Sigmoid colon (tissue), 7 donors: ENCODE measurements at regions of chr9 and their contacts with region 1.

Region 1: DNA sequence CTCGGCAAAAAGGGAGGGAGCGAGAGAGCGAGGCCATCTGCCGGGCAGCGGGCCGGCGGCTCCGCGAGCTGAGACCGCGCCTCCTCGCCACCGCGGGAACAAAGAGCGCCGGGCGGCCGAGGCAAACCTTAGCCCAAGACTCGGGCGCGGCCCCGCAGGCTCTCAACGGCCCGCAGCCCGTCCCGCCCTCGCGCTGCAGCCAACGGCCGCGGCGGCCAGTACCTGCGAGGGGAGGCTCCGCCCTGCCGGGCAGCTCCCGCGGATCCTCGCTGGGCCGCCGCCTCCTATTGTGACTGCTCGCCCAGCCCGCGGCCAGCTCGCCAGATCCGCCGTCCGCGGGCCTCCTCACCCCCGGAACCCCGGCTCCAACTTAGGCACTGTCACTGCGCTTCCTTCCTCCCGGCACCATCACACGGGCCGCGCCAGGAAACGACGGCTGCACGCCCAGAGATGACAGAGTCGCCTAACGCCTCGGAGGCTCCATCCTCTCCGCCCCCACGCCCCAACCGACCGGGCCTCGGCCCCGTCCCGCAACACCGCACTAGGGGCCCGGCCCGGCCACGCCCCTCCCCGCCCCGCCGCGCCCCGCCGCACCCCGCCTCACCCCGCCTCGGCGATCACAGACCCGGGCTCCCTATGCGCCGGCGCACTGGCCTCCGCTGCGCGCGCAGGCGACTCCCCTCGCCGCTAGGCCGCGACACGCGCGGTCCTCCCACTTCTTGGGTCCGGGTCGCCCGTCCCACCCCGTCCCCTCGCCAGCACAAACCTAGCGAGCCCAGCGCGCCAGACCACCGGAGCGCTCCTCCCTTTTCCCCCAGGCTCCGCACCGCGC is 479 bp upstream of the RNF38 start:
- DNase-seq: peak; percentile 93
- H3K4me3 ChIP-seq: peak overlapping the region; percentile 81 to 88 (median 86)
- H3K27ac ChIP-seq: peak overlapping the region; percentile 94 to 98 (median 96)
- H3K4me1 ChIP-seq: peaks cover 0 to 35% (median 26%) of the 10 kb centered on the region in 4 donors
- H3K27me3 ChIP-seq: no peaks in the 10 kb centered on the region
- CTCF ChIP-seq: no peak
- EP300 ChIP-seq: no peak
- POLR2A ChIP-seq: peak in 1 of 2 donors; percentile 28

Region 2: DNA sequence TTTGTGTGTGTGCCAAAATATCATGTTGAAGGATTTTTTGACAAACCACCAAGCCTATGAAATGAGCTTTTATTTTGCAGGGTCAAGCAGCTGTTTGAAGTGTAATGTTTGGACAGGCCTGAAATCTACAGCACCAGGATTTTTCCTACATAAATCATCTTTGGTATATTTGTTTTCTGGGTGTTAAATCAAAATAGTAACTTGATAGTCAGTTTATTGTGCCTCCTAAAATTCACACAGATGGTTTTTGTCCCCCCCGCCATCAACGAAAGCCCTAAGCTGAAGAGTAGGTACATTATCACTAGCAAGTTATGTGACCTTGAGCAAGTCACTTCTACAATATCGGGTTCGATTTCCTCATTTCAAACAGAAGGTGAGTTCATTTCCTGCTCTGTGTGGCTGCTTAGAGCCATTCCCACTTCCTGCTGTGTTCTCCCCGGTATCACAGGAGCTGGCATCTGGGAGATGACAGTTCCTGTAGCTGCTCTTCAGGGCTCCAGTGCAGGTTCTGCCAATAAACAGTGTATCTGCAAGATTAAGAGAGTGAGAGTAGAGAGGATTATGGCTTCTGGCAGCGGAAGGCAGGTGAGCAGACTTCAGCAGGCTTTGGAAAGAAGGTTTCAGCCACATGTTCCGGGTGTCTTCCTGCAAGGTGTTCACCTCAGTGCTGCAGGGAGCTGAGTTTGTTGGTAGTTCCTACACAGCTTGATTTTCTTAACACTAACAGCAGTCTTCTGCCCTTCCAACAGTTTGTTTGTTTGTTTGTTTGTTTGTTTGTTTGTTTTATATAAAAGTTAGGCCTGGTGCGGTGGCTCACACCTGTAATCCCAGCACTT is 93.9 kb before region 1 on chr9:
- intact Hi-C with region 1: no loop called
- DNase-seq: no peak
- H3K4me3 ChIP-seq: no peak overlapping the region
- H3K27ac ChIP-seq: no peak overlapping the region
- H3K4me1 ChIP-seq: no peaks in the 10 kb centered on the region
- H3K27me3 ChIP-seq: no peaks in the 10 kb centered on the region
- CTCF ChIP-seq: no peak
- EP300 ChIP-seq: no peak
- POLR2A ChIP-seq: no peak

Region 3: DNA sequence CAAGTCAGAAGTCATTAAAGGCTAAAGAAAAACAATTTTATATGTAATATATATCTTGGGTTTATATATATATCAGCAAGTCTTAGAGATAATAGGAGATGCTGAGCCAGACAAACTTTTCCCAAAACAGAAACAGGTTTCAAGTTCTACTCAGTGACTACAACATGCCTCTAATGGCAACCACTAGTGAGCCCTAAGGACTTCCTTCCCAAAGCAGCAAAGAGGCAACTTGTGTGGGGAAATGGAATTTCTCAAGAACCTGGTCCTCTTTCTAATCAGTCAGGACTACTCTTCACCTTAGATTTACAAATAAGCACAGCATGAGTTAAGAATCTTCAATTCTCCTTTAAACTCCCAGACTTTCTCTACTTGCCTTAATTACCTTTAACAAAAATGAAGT is 18.1 kb before region 1 on chr9:
- intact Hi-C with region 1: no loop called
- DNase-seq: no peak
- H3K4me3 ChIP-seq: no peak overlapping the region
- H3K27ac ChIP-seq: no peak overlapping the region
- H3K4me1 ChIP-seq: peaks cover 0 to 49% (median 25%) of the 10 kb centered on the region in 4 donors
- H3K27me3 ChIP-seq: no peaks in the 10 kb centered on the region
- CTCF ChIP-seq: no peak
- EP300 ChIP-seq: no peak
- POLR2A ChIP-seq: no peak

Region 4: GRCh38 chr9:36487482-36488388 is 87.2 kb after region 1 on chr9:
- intact Hi-C with region 1: loop called (anchors 1 kb)
- DNase-seq: peak; percentile 95
- H3K4me3 ChIP-seq: peak overlapping the region; percentile 36 to 100 (median 92)
- H3K27ac ChIP-seq: peak overlapping the region; percentile 90 to 94 (median 92)
- H3K4me1 ChIP-seq: peaks cover 0 to 33% (median 27%) of the 10 kb centered on the region in 4 donors
- H3K27me3 ChIP-seq: no peaks in the 10 kb centered on the region
- CTCF ChIP-seq: peak in 1 of 4 experiments; percentile 21
- EP300 ChIP-seq: no peak
- POLR2A ChIP-seq: peak; percentile 56 to 60

Region 5: DNA sequence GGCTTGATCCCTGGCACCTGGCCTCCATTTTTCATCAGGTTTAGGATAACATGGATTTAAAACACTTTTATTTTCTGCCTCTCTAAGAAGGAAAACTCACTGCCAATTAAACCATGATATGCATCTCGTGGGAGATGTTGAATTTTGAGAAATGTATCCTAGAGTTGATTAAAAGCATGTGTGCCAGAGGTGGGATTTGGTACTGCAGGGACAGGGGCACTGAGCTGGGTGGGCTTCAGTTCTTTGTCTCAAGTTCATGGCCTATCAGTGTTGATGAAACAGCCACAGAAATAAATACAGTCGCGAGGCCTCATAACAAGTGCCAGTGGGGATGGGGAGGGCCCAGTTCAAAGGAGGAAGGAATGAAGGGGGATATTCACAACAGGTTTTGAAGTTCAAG is 1120.1 kb after region 1 on chr9:
- intact Hi-C with region 1: no loop called
- DNase-seq: no peak
- H3K4me3 ChIP-seq: no peak overlapping the region
- H3K27ac ChIP-seq: no peak overlapping the region
- H3K4me1 ChIP-seq: no peaks in the 10 kb centered on the region
- H3K27me3 ChIP-seq: no peaks in the 10 kb centered on the region
- CTCF ChIP-seq: no peak
- EP300 ChIP-seq: no peak
- POLR2A ChIP-seq: no peak